Common myeloid progenitor, CD34-positive (primary cell): ENCODE measurements at regions of chr2 and their contacts with region 1.

Region 1: DNA sequence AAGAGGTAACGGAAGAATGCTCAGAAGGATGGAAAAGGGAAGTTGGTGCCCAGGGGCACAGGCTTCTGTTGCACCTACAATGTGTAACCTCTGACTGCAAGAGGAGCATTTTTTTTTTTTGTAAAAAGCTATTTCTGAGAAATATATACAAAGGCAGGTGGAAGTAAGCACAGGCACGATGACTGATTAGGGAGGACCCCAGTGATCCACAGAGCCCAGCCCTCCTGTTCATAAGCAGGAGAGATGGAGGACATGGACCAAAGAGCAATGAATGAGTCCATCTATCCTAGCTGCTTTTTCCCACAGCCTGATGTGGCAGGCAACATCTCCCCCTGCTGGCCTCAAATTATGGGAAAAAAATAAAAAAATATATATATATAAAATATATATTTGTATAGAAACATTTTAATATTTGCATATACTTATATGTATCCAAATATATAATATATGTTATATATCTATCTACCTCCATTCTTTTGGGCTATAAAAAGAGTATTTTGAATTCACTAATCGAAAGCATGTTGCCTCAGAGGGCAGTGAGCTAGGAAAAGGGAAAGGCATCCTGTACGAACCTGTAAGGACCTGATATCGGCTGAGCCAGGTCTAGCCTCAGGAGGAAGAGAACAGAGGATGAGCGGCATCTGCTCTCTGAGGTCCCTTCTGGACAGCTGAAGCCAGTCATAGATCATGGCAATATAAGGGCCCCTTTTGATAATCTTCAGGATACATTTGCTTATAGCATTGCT is 166.0 kb upstream of the STK17B start:
- DNase-seq: peak; percentile 36 to 56 (median 47)
- H3K4me3 ChIP-seq: no peak overlapping the region
- H3K27ac ChIP-seq: no peak overlapping the region
- H3K4me1 ChIP-seq: peaks cover 0 to 2% (median under 1%) of the 10 kb centered on the region in 4 experiments
- H3K27me3 ChIP-seq: no peaks in the 10 kb centered on the region

Region 2: DNA sequence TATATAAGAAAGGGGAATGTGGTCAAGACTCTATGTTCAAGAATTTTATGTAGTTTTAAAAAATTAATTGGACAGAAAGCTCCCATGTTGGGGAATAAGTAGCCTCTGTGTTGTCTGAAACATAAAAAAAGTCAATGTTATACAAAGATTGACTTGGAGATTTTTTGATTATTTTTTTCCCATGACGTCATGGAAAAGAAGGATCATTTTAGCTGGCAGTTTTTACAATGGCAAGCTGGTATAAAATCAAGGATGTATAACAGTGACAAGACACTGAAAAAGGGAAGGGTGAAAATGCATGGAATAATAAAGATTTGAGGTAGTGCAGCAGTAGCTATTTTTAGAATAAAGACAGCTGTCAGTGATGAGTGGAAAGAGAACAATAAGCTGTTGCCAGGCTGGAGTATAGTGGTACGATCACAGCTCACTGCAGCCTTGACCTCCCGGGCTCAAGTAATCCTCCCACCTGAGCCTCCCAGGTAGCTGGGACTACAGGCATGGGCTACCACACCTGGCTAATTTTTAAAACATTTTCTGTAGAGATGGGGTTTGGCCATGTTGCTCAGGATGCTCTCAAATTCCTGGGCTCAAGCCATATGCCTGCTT is 671.2 kb before region 1 on chr2:
- CTCF ChIA-PET with region 1: interaction called, 13 read pairs
- POLR2A ChIA-PET with region 1: no interaction called
- DNase-seq: no peak
- H3K4me3 ChIP-seq: no peak overlapping the region
- H3K27ac ChIP-seq: no peak overlapping the region
- H3K4me1 ChIP-seq: peaks cover 6 to 23% (median 12%) of the 10 kb centered on the region in 4 experiments
- H3K27me3 ChIP-seq: no peaks in the 10 kb centered on the region

Region 3: GRCh38 chr2:196376984-196377877 is 39.9 kb after region 1 on chr2:
- CTCF ChIA-PET with region 1: no interaction called
- POLR2A ChIA-PET with region 1: no interaction called
- DNase-seq: no peak
- H3K4me3 ChIP-seq: no peak overlapping the region
- H3K27ac ChIP-seq: no peak overlapping the region
- H3K4me1 ChIP-seq: no peaks in the 10 kb centered on the region
- H3K27me3 ChIP-seq: no peaks in the 10 kb centered on the region